Mucosa of descending colon (tissue), 3 donors: ENCODE measurements at regions of chr17 and their contacts with region 1.

Region 1: DNA sequence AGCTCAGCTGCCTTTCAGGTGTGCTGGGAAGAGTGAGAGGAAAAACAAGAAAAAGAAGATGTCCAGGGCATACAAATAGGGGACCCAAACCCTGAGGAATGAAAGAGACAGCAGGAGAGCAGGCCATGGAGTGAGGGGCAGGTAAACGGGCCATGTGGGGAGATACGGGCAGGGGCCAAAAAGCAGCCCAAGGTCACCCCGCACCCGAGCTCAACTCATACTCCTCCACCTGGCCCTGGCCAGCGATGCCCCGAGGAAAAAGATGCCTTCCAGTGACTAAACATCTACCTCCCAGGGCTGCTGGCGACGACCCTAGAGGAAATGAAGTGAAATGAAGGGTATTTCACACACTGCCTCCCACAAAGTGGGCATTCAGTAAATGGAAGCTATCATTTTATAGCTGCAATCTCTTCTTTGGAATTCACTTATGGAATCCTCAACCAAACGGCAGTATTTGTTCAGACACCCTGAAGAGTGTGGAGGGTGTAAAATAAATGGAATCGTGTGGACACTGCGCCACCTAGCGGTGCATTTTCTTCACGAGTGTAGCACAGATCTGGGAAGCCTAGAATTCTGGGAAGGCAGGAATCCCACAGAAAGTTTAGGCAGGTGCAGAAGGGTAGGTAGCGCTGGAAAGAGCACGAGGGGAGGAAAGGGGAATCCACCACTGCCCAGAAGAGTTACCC is 14.9 kb downstream of the ELAC2 start:
- DNase-seq: peak in 2 of 3 donors; percentile 79 to 97
- ATAC-seq: peak; percentile 86
- H3K4me3 ChIP-seq: no peak overlapping the region
- H3K4me1 ChIP-seq: no peaks in the 10 kb centered on the region
- CTCF ChIP-seq: peak; percentile 63

Region 2: DNA sequence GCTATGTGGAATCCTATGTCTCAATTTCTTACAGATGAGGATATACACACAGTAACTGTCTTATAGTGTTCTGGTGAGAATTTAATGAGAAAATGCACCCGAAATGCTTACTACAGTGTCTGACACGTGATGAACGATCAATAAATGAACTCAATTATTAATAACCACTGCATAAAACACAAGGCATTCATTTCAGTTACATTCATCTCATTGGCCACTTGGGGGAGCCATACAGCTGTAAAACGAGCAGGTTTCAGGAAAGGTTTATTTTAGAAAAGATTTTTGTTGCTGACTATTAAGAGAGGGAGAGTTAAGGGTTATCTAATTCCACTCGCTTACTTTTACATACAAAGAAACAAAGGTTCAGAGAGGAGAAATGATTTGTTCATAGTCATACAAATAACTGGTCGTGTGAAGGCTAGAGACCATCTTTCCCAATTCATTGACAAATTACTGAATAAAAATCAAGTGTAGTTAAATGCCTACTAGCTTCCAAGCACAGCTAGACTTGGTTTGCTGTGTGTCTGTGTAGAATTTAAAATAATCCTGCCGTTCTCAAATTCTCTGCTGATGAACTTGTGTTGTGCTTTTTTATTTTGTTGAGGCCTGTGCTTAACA is 822.2 kb before region 1 on chr17:
- intact Hi-C with region 1: loop called (anchors 5 to 10 kb)
- DNase-seq: peak in 1 of 3 donors; percentile 49
- ATAC-seq: peak; percentile 30
- H3K4me3 ChIP-seq: no peak overlapping the region
- H3K4me1 ChIP-seq: no peaks in the 10 kb centered on the region
- CTCF ChIP-seq: peak; percentile 54

Region 3: DNA sequence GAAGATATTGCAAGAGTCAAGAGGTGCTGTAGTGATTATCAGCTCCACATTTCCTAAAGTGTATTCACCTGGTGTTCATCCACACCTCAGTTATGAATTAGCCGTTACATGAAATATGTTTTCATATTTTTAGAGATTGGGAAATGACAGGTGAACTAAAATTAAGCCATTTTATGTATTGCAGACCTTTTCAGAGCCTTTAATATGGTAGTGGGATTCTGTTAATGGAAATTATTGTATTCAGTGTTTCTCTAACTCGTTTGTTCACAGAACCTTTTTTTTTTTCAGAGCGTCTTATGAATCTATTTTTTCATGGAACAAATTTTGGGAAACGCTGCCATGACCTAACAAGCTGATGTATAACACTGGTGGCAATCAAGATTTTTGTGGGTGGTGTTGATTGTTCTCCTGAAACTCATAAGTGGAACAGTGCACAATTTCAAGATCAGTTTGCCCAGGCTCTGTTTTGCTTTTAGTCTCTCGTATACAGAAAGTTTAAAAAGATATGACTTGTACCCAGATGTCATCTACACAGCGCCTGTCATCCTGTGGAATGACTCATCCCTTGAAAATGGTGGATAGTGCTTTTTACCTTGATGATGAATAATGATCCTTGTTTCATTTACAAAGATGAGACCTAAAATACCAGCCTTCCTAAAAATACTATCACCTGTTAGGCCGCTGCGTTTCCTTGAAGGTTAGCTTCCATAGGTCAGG is 124.8 kb before region 1 on chr17:
- intact Hi-C with region 1: no loop called
- DNase-seq: no peak
- ATAC-seq: no peak
- H3K4me3 ChIP-seq: no peak overlapping the region
- H3K4me1 ChIP-seq: no peaks in the 10 kb centered on the region
- CTCF ChIP-seq: no peak